ENCODE measurements at regions of chr5 and their contacts with region 1.

Region 1: DNA sequence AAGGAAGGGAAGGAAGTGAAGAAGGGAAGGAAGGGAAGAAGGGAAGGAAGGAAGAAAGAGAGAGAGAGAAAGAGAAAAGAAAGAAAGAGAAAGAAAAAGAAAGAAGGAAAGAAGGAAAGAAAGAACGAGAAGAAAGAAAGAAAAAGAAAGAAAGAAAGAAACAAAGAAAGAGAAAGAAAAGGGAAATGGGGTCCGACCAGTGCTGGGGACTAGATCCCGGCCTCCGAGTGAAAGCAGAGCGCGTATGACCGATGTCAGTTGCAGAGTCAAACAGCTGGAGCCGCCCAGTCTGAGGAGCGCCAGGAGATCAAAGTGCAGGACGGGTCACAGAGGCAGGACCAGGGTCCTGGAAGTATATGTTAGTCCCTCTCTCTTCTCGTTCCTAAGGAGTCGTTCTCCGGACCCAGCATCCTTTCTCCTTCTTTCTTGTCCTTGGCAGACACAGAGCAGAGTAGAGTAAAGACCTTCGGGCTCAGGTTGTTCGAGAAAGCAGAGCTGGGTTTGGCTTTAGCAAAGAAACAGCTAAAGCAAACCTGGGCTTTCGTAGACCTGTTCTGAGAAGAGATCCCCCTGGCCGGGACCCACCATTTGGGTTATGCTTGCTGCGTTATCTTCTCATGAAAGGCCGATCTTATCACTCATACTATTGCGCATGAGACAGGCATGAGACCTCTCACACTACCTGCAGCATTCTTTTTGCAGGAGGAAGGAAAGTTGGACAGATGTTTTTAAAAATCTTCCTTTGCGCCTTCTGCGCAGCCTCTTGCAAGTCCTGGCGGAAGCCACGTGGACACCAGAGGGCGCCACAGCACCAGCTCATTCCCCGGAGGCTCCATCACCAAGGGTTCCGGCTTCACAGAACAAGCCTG is 305.2 kb upstream of the MSX2 start:
- DNase-seq: peak; percentile 89 to 92 (median 90)
- ATAC-seq: peak; percentile 88
- H3K4me3 ChIP-seq: no peak overlapping the region
- H3K27ac ChIP-seq: no peak overlapping the region
- H3K4me1 ChIP-seq: no peaks in the 10 kb centered on the region
- H3K27me3 ChIP-seq: peaks cover 0 to 3% of the 10 kb centered on the region in 2 donors
- CTCF ChIP-seq: peak; percentile 87 to 94 (median 89)
- POLR2A ChIP-seq: no peak

Region 2: GRCh38 chr5:174793684-174794328 is 374.6 kb after region 1 on chr5:
- intact Hi-C with region 1: loop called (anchors 5 kb)
- DNase-seq: peak; percentile 47 to 69 (median 60)
- ATAC-seq: peak; percentile 66
- H3K4me3 ChIP-seq: no peak overlapping the region
- H3K27ac ChIP-seq: no peak overlapping the region
- H3K4me1 ChIP-seq: peaks cover 5% of the 10 kb centered on the region
- H3K27me3 ChIP-seq: no peaks in the 10 kb centered on the region
- CTCF ChIP-seq: peak; percentile 62 to 89 (median 79)
- POLR2A ChIP-seq: no peak

Region 3: DNA sequence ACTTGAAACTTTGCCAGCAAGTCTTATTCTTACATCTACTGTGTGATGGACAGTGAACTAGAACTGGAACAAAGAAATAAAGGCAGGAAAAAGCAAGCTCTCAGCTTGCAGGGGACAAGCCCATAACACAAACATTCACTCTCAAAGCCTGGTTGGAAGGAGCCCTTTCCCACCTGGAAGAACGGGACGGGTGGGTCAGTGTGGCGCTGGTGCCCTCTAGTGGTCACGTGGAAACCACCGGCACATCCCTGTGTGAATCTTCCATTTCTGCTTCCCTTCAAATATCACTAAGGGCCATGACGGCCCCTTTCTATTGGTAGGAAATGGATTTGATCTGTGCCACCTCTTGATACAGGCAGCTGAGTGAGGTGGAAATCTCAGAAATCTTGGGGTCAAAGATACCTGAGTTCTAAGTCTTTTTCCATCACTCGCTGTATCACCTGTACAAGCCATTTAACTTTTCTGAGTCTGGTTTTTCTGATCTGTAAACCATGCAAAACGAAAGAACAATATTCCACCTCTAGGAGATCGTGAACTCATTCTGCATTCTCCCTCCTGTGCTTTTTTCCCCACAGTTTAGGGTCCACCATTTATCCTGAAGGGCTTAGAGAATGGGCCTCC is 516.8 kb after region 1 on chr5:
- intact Hi-C with region 1: loop called (anchors 10 kb)
- DNase-seq: peak; percentile 52 to 67 (median 62)
- ATAC-seq: peak; percentile 52
- H3K4me3 ChIP-seq: no peak overlapping the region
- H3K27ac ChIP-seq: no peak overlapping the region
- H3K4me1 ChIP-seq: no peaks in the 10 kb centered on the region
- H3K27me3 ChIP-seq: no peaks in the 10 kb centered on the region
- CTCF ChIP-seq: peak; percentile 72 to 92 (median 75)
- POLR2A ChIP-seq: no peak